ENCODE measurements at regions of chr7 and their contacts with region 1.

Region 1: GRCh38 chr7:132318352-132319318 is 257.6 kb downstream of the PLXNA4 start:
- DNase-seq: peak; percentile 76 to 97 (median 89)

Region 2: GRCh38 chr7:131800531-131800930 is 518.1 kb before region 1 on chr7:
- intact Hi-C with region 1: no loop called
- DNase-seq: peak in 1 of 10 donors; percentile 27

Region 3: GRCh38 chr7:132380059-132380458 is 61.4 kb after region 1 on chr7:
- intact Hi-C with region 1: no loop called
- DNase-seq: no peak

Region 4: DNA sequence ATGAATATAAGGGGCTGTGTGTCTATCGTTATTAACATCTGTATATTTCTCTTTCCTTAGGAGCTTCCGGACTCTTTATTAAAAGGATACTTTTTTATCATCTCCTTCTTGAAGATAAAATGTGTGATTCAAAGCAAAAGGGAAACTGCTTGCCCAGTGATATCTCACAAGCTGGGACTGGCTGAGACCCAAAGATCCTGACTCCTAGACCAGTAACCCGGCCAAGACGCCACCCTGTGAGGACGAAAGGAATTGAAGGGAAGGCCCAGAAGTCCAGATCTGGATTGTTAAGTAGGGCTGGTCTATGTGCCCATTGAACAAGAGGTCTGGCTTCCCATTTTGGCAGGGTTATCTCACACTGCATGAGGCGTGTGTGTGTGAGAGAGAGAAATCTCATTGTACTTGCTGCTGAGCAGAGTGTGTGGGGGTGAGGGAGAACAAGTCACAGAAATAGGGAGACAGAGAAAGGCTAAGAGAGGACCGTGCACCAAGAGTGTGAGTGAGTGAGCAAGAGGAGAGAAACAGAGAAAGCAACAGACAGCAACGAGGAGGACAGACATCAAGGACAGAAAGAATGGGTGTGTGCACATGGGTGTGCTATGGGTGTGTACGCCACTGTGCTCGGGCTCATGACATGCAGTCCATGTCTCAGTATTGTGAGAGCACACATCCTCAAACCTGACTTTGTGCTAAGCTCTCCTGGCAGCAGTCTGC is 182.2 kb after region 1 on chr7:
- intact Hi-C with region 1: loop called (anchors 10 kb)
- DNase-seq: peak in 1 of 10 donors; percentile 83

Region 5: DNA sequence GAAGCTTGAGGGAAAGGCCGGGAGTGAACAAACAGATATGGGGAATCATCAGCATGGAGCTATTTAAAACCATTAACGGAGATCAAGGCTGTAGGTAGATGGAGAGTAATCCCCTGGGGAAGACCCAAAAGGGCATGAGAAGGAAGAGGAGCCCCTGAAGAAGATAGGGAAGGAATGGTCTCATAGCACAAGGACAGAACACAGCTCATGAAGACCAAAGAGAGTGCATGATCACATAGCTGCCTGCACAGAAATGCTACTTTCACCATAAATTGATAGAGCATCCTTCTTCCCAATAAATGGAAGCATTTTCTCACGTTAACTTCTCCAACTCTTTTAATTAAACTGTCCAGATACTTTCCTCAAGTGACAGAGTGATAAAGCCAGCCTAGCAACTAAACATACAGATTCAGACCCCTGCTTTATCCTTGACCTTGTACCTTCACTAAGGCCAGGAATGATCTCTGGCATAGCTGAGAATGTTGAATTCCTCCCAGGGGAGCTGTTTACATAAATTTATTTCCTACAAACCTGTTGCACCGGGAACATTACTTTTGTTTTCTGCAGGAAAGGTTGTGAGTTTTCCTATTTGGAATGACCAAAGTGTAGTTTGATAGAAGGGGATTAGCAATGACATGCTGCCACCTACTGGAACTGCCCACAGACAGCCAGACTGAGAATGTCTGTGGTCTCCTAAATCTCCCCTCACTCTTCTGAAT is 1697.7 kb after region 1 on chr7:
- intact Hi-C with region 1: loop called (anchors 10 kb)
- DNase-seq: peak in 5 of 10 donors; percentile 18 to 61 (median 43)